ENCODE measurements at regions of chr11 and their contacts with region 1.

Region 1: GRCh38 chr11:35111161-35112055 is 27.6 kb upstream of the CD44 start:
- DNase-seq: no peak
- H3K4me3 ChIP-seq: no peak overlapping the region
- CTCF ChIP-seq: no peak

Region 2: DNA sequence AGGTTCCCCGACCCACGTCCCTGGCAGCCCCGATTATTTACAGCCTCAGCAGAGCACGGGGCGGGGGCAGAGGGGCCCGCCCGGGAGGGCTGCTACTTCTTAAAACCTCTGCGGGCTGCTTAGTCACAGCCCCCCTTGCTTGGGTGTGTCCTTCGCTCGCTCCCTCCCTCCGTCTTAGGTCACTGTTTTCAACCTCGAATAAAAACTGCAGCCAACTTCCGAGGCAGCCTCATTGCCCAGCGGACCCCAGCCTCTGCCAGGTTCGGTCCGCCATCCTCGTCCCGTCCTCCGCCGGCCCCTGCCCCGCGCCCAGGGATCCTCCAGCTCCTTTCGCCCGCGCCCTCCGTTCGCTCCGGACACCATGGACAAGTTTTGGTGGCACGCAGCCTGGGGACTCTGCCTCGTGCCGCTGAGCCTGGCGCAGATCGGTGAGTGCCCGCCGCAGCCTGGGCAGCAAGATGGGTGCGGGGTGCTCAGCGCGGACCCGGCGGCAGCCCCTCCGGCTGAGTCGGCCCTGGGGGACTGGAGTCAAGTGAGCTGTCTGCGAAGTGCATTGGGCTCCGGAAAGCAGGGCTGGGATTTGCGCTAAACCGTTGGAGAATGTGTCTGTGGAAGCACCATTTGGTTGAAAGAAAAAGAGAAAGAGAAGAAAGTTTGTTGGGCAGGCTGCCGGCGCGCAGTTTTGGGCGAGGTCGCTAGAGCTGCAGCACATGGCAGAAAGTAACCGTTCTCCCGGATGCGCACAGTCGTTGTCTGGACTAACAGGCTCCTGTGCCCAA is 27.7 kb after region 1 on chr11 and contains the start of gene CD44:
- CTCF ChIA-PET with region 1: no interaction called
- POLR2A ChIA-PET with region 1: interaction called, 10 read pairs
- DNase-seq: no peak
- H3K4me3 ChIP-seq: peak within 1 kb of the TSS; percentile 94
- CTCF ChIP-seq: no peak

Region 3: GRCh38 chr11:35237860-35238715 is 126.7 kb after region 1 on chr11:
- CTCF ChIA-PET with region 1: no interaction called
- POLR2A ChIA-PET with region 1: no interaction called
- DNase-seq: no peak
- H3K4me3 ChIP-seq: no peak overlapping the region
- CTCF ChIP-seq: peak; percentile 20

Region 4: GRCh38 chr11:35272391-35272902 is 161.0 kb after region 1 on chr11:
- CTCF ChIA-PET with region 1: no interaction called
- POLR2A ChIA-PET with region 1: no interaction called
- DNase-seq: no peak
- H3K4me3 ChIP-seq: no peak overlapping the region
- CTCF ChIP-seq: no peak